ENCODE measurements at regions of chr3 and their contacts with region 1.

Region 1: DNA sequence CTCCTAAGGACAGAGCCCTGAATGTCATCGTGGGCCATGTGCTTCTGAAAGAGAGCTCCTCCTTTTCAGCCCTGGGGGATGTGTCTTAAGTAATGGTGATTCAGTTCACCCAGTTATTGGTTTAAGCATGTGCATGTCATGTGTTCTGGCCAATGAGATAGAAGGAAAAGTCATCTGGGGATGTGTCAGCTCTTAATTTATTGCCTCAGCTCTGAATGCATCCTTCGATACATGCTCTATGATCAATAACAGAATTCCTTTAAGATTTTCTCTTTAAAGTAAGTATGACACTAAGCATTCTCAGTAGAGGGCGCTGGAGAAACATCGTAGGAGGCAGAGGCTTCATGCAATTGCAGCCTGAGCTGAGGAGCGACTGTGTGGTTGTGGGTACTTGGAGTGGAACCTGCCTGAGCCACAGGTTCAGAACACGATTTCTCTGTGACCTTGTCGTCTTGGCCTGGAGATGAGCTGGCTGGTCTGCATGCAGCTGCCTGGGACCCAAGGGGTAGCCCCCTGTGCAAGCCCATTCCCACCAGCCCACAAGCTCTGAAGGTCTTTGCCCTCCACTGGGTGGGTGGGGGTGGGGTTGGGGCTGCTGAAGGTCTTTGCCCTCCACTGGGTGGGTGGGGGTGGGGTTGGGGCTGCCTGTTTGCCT is 69.5 kb downstream of the C3orf38 start:
- DNase-seq: peak in 1 of 2 experiments; percentile 66
- H3K4me3 ChIP-seq: no peak overlapping the region
- H3K27ac ChIP-seq: no peak overlapping the region
- H3K4me1 ChIP-seq: no peaks in the 10 kb centered on the region; a peak in 1 of 7 replicates
- H3K27me3 ChIP-seq: no peaks in the 10 kb centered on the region
- CTCF ChIP-seq: peak; percentile 49 to 82 (median 55); a peak in 3 of 4 replicates
- EP300 ChIP-seq: no peak
- POLR2A ChIP-seq: no peak
- RAD21 ChIP-seq: peak; percentile 93 to 95

Region 2: GRCh38 chr3:88203642-88204055 is 15.6 kb before region 1 on chr3:
- CTCF ChIA-PET with region 1: interaction called, 32 read pairs
- POLR2A ChIA-PET with region 1: no interaction called
- DNase-seq: peak in 1 of 2 experiments; percentile 87
- H3K4me3 ChIP-seq: no peak overlapping the region
- H3K27ac ChIP-seq: no peak overlapping the region
- H3K4me1 ChIP-seq: no peaks in the 10 kb centered on the region
- H3K27me3 ChIP-seq: no peaks in the 10 kb centered on the region
- CTCF ChIP-seq: peak; percentile 72 to 90 (median 79)
- EP300 ChIP-seq: no peak
- POLR2A ChIP-seq: no peak
- RAD21 ChIP-seq: peak; percentile 97 to 98

Region 3: GRCh38 chr3:88231207-88231606 is 11.9 kb after region 1 on chr3:
- CTCF ChIA-PET with region 1: interaction called, 18 read pairs
- POLR2A ChIA-PET with region 1: no interaction called
- DNase-seq: no peak
- H3K4me3 ChIP-seq: no peak overlapping the region
- H3K27ac ChIP-seq: no peak overlapping the region
- H3K4me1 ChIP-seq: peaks cover 0 to 3% (median 0%) of the 10 kb centered on the region in 4 experiments; a peak in 1 of 7 replicates
- H3K27me3 ChIP-seq: no peaks in the 10 kb centered on the region
- CTCF ChIP-seq: no peak
- EP300 ChIP-seq: no peak
- POLR2A ChIP-seq: no peak
- RAD21 ChIP-seq: no peak